ENCODE measurements at regions of chr10 and their contacts with region 1.

Region 1: GRCh38 chr10:124741281-124741921 is 2.8 kb downstream of the FAM53B start:
- DNase-seq: peak; percentile 53 to 88 (median 74)
- ATAC-seq: peak; percentile 52 to 62 (median 54)
- H3K4me3 ChIP-seq: peak overlapping the region; percentile 26 to 79
- H3K4me3 Mint-ChIP-seq: peak overlapping the region; percentile 89 to 99 (median 95)
- H3K27ac ChIP-seq: peak overlapping the region; percentile 83
- H3K27ac Mint-ChIP-seq: peak overlapping the region; percentile 90 to 96
- H3K4me1 ChIP-seq: peaks cover 54 to 68% of the 10 kb centered on the region in 2 experiments
- H3K4me1 Mint-ChIP-seq: peaks cover 73 to 74% (median 74%) of the 10 kb centered on the region in 3 donors
- H3K27me3 ChIP-seq: no peaks in the 10 kb centered on the region
- H3K27me3 Mint-ChIP-seq: no peaks in the 10 kb centered on the region

Region 2: DNA sequence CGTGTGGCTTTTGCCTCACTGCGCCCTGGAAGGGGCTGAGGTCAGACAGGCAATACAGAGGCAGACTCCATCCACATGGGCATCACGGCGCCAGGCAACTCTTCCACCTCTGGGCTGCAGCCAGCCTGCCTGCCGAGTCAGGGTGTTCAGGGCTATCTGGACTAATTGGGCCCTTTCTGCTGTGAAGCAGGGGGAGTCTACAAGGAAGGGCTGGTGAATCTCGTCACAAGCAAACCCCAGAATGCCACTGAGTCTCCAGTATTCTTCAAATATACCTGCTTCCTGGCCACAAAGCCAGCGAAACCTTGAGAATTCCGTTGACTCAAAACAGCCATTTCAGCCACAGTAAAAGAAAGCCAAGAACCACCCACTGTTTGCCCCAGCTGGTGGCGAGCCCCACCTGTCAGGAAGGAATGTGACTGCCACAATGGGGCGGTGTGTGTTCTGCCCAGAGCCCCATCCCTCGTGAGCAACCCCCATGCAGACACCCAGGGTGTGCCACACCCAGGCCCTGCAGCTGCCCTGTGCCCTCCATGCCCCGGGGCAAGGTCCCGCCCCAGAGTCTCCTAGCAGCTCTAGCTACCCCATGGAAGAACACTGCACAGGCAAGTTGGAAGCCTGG is 114.5 kb before region 1 on chr10:
- CTCF ChIA-PET with region 1: interaction called, 3 to 15 read pairs
- POLR2A ChIA-PET with region 1: no interaction called
- DNase-seq: peak in 22 of 35 experiments; percentile 25 to 67 (median 36)
- ATAC-seq: peak; percentile 86 to 89 (median 88)
- H3K4me3 ChIP-seq: no peak overlapping the region
- H3K4me3 Mint-ChIP-seq: peak overlapping the region; percentile 17 to 59 (median 31)
- H3K27ac ChIP-seq: peak overlapping the region; percentile 64
- H3K27ac Mint-ChIP-seq: peak overlapping the region; percentile 91
- H3K4me1 ChIP-seq: peaks cover 20 to 87% of the 10 kb centered on the region in 2 experiments
- H3K4me1 Mint-ChIP-seq: peaks cover 51 to 75% (median 57%) of the 10 kb centered on the region in 3 donors
- H3K27me3 ChIP-seq: no peaks in the 10 kb centered on the region
- H3K27me3 Mint-ChIP-seq: no peaks in the 10 kb centered on the region

Region 3: DNA sequence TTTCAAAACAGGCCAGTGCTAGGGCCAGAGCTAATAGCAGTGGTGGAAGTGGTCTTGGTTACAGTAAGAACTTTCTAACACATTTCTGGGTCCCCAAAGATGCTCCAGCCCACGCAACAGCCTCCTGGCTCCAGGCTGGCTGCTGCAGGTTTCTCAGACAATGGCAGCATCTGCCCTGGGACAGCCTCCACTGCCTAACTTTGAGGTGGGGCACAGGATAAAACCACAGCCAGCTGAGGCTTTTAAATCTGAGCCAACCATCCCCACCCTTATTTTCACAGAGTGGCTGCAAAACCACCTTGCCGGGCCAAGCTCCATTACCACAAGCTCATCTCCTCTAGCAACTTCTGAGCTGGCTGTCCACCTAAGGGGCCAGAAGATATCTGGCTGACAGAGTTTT is 82.0 kb before region 1 on chr10:
- CTCF ChIA-PET with region 1: interaction called in 1 of 2 experiments, 10 read pairs
- POLR2A ChIA-PET with region 1: interaction called in 1 of 2 experiments, 9 read pairs
- DNase-seq: peak in 1 of 35 experiments; percentile 49
- ATAC-seq: peak; percentile 32 to 50 (median 38)
- H3K4me3 ChIP-seq: no peak overlapping the region
- H3K4me3 Mint-ChIP-seq: peak overlapping the region; percentile 14 to 54 (median 21)
- H3K27ac ChIP-seq: peak overlapping the region; percentile 88
- H3K27ac Mint-ChIP-seq: peak overlapping the region; percentile 92 to 96
- H3K4me1 ChIP-seq: peaks cover 22 to 94% of the 10 kb centered on the region in 2 experiments
- H3K4me1 Mint-ChIP-seq: peaks cover 64 to 89% (median 76%) of the 10 kb centered on the region in 3 donors
- H3K27me3 ChIP-seq: no peaks in the 10 kb centered on the region
- H3K27me3 Mint-ChIP-seq: no peaks in the 10 kb centered on the region

Region 4: DNA sequence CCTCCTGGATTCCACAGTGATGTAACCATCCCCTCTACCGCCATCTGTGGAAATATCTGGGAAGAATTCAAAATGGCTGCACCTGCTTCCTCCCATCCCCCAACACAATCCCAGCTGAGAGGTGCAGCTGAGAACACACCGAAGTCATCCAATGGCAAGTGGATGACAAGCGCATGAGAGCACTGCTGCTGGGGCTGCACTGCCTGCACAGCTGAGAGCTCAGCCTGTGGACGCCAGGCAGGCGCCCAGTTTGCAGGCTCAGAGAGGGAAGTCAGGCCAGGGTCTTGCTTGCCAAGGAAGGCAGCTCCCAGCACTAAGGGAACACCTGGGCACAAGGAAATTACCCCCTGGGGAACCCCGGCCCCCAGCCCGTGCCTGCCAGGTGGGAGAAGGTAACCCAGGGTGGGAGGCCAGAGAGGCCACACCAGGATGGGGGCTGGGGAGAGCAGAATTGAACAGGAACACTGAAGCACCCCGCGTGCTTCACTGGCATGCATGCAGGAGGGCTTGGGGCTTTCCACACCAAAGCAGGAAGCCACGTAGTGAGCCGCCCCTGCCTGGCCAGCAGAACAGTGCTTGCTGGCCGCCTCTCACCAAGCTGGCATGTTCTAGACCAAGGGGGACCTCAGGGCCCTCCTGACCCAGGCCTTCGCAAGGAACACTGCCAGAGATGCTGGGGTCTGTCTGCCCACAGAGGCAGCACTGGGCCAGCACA is 43.4 kb before region 1 on chr10:
- CTCF ChIA-PET with region 1: interaction called, 3 to 15 read pairs
- POLR2A ChIA-PET with region 1: interaction called in 1 of 2 experiments, 4 read pairs
- DNase-seq: peak in 28 of 35 experiments; percentile 33 to 80 (median 46)
- ATAC-seq: peak; percentile 43 to 69 (median 50)
- H3K4me3 ChIP-seq: no peak overlapping the region
- H3K4me3 Mint-ChIP-seq: peak overlapping the region; percentile 28 to 80 (median 47)
- H3K27ac ChIP-seq: peak overlapping the region; percentile 90
- H3K27ac Mint-ChIP-seq: peak overlapping the region; percentile 99 to 100
- H3K4me1 ChIP-seq: peaks cover 49 to 98% of the 10 kb centered on the region in 2 experiments
- H3K4me1 Mint-ChIP-seq: peaks cover 93 to 100% (median 96%) of the 10 kb centered on the region in 3 donors
- H3K27me3 ChIP-seq: no peaks in the 10 kb centered on the region
- H3K27me3 Mint-ChIP-seq: no peaks in the 10 kb centered on the region

Region 5: GRCh38 chr10:124719213-124719851 is 22.1 kb before region 1 on chr10:
- CTCF ChIA-PET with region 1: interaction called, 15 to 132 read pairs
- POLR2A ChIA-PET with region 1: interaction called, 9 to 18 read pairs
- DNase-seq: peak in 33 of 35 experiments; percentile 59 to 89 (median 74)
- ATAC-seq: peak; percentile 59 to 64 (median 62)
- H3K4me3 ChIP-seq: peak overlapping the region in 1 of 2 donors; percentile 26
- H3K4me3 Mint-ChIP-seq: peak overlapping the region; percentile 56 to 76 (median 63)
- H3K27ac ChIP-seq: peak overlapping the region; percentile 98
- H3K27ac Mint-ChIP-seq: peak overlapping the region; percentile 83 to 93
- H3K4me1 ChIP-seq: peaks cover 69 to 98% of the 10 kb centered on the region in 2 experiments
- H3K4me1 Mint-ChIP-seq: peaks cover 95 to 99% (median 98%) of the 10 kb centered on the region in 3 donors
- H3K27me3 ChIP-seq: no peaks in the 10 kb centered on the region
- H3K27me3 Mint-ChIP-seq: no peaks in the 10 kb centered on the region

Region 6: GRCh38 chr10:125000366-125001312 is 259.2 kb after region 1 on chr10:
- CTCF ChIA-PET with region 1: no interaction called
- POLR2A ChIA-PET with region 1: no interaction called
- DNase-seq: peak in 2 of 35 experiments; percentile 7 to 20
- ATAC-seq: no peak
- H3K4me3 ChIP-seq: no peak overlapping the region
- H3K4me3 Mint-ChIP-seq: no peak overlapping the region
- H3K27ac ChIP-seq: no peak overlapping the region
- H3K27ac Mint-ChIP-seq: no peak overlapping the region
- H3K4me1 ChIP-seq: peaks cover 0 to 6% of the 10 kb centered on the region in 2 experiments
- H3K4me1 Mint-ChIP-seq: no peaks in the 10 kb centered on the region
- H3K27me3 ChIP-seq: peaks cover 0 to 39% of the 10 kb centered on the region in 2 experiments
- H3K27me3 Mint-ChIP-seq: peaks cover 0 to 3% of the 10 kb centered on the region in 2 donors

Measured in T-cell (primary cell).